Cardiac septum (tissue), 1 donor: ENCODE measurements at regions of chr16 and their contacts with region 1.

Region 1: GRCh38 chr16:5502467-5502869 is 404.9 kb upstream of the EEF2KMT start:
- DNase-seq: no peak

Region 2: DNA sequence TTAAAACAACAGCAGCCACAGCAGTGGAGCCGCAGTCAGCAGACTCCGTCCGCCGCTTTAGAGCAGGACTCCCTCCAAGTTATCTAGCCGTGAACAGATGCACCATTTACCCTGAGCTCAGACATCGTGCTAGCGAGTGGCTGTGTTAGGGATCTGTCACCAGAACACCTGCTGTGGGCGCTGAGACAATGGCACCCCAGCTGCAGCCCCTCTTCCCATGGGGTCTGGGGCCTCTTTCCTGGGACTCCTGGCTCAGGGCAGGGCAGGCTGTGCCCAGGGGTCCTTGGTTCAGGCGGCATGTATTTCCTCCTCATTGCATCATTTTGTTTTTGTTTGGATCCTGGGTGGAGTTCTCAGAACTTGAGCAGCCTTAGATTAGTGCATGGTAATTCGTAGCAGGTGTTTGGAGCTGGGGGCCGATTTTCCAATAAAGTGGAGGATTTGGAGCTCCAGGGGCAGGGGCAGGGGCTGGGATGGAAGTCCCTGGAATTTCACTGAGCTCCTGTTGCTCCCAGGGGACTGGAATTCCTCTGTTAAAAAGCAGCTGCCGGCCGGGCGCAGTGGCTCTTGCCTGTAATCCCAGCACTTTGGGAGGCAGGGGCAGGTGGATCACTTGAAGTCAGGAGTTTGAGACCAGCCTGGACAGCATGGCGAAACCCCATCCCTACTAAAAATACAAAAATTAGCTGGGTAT is 1051.4 kb before region 1 on chr16:
- intact Hi-C with region 1: no loop called
- DNase-seq: no peak

Region 3: GRCh38 chr16:5604770-5605169 is 102.3 kb after region 1 on chr16:
- intact Hi-C with region 1: loop called (anchors 10 kb)
- DNase-seq: no peak